ENCODE measurements at regions of chr6 and their contacts with region 1.

Region 1: DNA sequence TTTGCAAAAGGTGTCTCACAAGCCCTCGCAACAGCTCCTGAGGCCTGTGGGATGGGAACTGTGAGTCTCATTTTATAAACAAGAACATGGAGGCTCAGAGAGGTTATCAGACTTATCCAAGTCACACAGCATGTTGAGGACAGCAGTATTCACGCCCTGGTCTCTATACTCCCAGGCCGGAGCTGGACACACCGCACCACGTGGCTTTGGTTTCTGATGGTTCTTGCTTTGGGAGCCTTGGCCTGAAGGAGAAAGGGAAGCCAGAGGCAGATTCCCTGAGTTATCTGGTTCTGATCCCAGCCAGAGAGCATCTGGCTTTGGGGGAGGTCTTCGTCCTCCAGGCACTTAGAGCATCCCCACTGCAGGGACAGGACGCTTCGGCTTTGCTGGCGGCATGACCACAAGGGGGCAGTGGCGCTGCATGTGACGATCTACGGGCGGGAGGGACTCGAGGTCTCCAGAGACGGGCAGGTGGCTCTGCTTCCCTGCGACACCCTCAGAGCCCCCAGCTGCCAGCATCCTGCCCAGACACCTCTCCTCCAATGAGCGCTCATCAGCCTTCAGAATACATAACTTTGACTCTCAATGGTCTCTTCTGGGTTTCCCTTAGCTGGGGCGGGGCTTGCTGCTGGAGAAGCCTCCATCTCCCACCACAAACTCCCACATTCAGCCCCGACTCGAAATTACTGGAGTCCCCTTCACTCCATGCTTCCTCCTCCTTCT is 51.4 kb upstream of the SAYSD1 start:
- DNase-seq: peak; percentile 71
- H3K4me3 Mint-ChIP-seq: no peak overlapping the region
- H3K27ac Mint-ChIP-seq: no peak overlapping the region
- H3K4me1 Mint-ChIP-seq: peaks cover 6% of the 10 kb centered on the region
- H3K27me3 Mint-ChIP-seq: peaks cover 3% of the 10 kb centered on the region

Region 2: DNA sequence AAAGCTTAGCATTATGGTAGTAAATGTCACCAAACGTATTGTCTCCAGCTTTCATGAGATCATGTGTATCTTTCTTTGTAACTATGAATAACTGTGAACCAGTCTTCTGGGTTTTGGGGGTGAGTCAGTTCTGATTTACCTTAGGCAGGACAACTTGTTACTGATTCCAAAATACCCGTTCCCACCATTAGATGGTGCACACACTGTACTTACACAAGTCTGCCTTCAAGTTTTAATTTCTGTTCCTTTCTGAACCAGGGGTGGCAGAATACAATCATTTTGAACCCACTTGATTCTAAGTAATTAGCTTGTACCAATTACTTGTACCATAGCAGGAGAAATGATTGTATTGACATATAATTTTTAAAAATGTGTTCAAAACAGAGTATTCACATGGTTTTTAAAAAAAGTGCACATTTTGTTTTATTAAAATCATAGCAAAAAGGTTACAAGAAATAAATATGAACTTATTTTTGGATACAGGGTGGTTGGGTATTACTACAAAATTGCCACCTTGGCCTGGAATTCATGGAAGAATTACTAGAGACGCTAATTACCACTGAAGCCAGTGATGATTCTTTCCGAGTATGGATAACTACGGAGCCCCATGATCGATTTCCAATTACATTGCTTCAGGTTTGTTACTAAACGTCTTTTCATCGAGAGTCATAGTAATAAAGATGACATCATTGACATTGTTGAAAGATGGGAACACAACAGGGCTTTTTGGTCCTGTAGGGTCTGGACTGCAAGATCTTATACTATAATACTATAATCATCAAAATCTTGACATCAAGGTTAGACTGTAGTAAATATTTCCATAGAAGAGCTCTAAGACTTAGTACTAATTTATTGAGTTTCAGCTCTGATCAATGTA is 192.9 kb before region 1 on chr6:
- intact Hi-C with region 1: loop called (anchors 1 kb)
- DNase-seq: no peak
- H3K4me3 Mint-ChIP-seq: no peak overlapping the region
- H3K27ac Mint-ChIP-seq: no peak overlapping the region
- H3K4me1 Mint-ChIP-seq: no peaks in the 10 kb centered on the region
- H3K27me3 Mint-ChIP-seq: peaks cover 18% of the 10 kb centered on the region

Region 3: DNA sequence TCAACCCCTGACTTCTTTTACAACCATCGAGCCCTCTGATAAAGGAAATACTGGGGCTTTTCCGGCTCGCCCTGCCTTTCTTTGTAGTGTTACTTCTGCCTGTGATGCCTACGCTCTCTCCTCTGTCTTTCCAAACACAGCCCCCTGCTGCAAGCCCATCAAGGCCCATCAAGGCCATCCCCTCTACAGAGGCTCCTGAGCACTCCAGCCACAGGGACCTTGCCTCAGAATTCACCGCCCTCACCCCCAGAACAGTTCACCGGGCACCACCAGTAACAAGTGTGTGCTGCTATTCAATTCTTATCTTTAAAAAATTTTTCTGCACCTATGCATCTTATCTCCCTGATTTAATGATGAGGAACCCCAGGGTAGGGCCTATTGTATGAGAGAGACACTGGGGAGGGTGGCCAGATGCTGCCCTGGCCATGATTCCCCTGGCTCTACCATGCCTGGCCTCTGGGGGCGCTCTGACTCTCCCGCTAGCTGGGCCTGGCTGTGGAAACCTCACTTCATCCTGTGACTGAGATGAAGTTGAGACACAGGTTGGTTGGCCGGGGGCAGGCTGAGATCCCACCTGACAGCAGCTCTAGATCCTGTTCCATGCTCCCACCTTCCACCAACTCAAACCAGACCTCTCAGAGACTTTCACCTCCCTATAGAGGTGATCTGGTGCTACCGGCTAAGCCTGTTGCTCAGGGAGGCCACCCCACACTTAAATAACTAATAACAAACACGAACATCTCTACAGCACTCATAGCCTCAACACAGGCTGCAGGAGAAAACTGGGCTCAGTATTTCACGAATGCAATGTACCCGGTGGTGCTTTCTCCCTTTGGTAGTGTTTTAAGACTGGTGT is 137.0 kb before region 1 on chr6:
- intact Hi-C with region 1: loop called (anchors 1 kb)
- DNase-seq: peak; percentile 14
- H3K4me3 Mint-ChIP-seq: no peak overlapping the region
- H3K27ac Mint-ChIP-seq: no peak overlapping the region
- H3K4me1 Mint-ChIP-seq: no peaks in the 10 kb centered on the region
- H3K27me3 Mint-ChIP-seq: peaks cover 28% of the 10 kb centered on the region

Region 4: GRCh38 chr6:39228992-39229767 is 62.8 kb after region 1 on chr6 and contains the start of gene KCNK5:
- intact Hi-C with region 1: loop called (anchors 1 kb)
- DNase-seq: peak; percentile 86
- H3K4me3 Mint-ChIP-seq: peak within 1 kb of the TSS; percentile 88
- H3K27ac Mint-ChIP-seq: peak within 1 kb of the TSS; percentile 94
- H3K4me1 Mint-ChIP-seq: peaks cover 54% of the 10 kb centered on the region
- H3K27me3 Mint-ChIP-seq: no peaks in the 10 kb centered on the region
- total RNA-seq, gene KCNK5: 36.7 and 38.7 TPM in 2 replicates

Region 5: GRCh38 chr6:39309942-39310531 is 143.7 kb after region 1 on chr6:
- intact Hi-C with region 1: loop called (anchors 1 kb)
- DNase-seq: peak; percentile 38
- H3K4me3 Mint-ChIP-seq: no peak overlapping the region
- H3K27ac Mint-ChIP-seq: no peak overlapping the region
- H3K4me1 Mint-ChIP-seq: no peaks in the 10 kb centered on the region
- H3K27me3 Mint-ChIP-seq: peaks cover 28% of the 10 kb centered on the region

Measured in activated T-helper 1 cell treated with anti-CD3 and anti-CD28 coated beads, Interleukin-12 subunit alpha, Interleukin-12 subunit beta, Interleukin-2, Interleukin-4 antibody, amounts not matched to agents 30 ng/mL and 10 ng/mL and 1 ng/mL, durations not matched to agents 14 hours and 24 hours and 36 hours (primary cell).